Astrocyte of the cerebellum (primary cell): ENCODE measurements at regions of chr4 and their contacts with region 1.

Region 1: DNA sequence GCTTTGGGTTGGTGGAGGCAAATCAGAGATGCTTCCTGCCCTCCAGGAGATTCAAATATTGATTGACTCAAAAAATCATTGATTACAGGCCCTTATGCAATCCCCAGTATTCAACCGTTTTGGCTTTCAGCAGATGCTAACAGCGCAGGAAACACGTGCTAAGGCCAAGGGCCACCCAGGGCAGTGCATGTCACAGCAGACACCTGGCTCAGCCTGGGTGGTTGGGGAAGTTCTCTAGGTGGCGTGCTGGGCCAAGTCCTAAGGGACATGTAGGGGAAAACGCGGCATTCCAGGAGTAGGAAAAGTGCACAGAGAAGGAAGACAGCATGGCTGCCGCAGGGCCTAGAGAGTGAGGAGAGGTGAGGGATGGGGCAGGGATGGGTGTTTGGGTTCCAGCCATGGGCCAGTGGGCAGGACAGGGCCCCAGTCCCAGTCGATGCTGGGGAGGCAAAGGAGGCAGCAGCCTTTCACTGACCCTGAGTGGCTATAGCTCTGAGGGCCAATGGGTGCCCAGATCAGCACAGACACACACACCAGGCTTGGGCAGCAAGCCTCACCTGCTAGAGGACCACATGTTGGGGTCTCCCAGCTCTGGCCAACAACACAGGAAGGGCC is 239.1 kb downstream of the EVC2 start:
- DNase-seq: no peak
- H3K4me3 ChIP-seq: no peak overlapping the region
- CTCF ChIP-seq: no peak

Region 2: GRCh38 chr4:5500165-5500564 is 30.9 kb after region 1 on chr4:
- in situ Hi-C with region 1: loop called (anchors 5 kb)
- DNase-seq: no peak
- H3K4me3 ChIP-seq: no peak overlapping the region
- CTCF ChIP-seq: no peak